Caco-2 (cell line): ENCODE measurements at regions of chr18 and their contacts with region 1.

Region 1: GRCh38 chr18:74748809-74749208 is 151.1 kb downstream of the ZNF407 start:
- DNase-seq: no peak
- H3K4me3 ChIP-seq: no peak overlapping the region
- H3K4me3 Mint-ChIP-seq: no peak overlapping the region
- H3K27ac Mint-ChIP-seq: no peak overlapping the region
- H3K4me1 ChIP-seq: no peaks in the 10 kb centered on the region
- H3K4me1 Mint-ChIP-seq: no peaks in the 10 kb centered on the region
- H3K27me3 ChIP-seq: no peaks in the 10 kb centered on the region
- H3K27me3 Mint-ChIP-seq: no peaks in the 10 kb centered on the region
- CTCF ChIP-seq: no peak

Region 2: GRCh38 chr18:74731097-74731496 is 17.7 kb before region 1 on chr18:
- CTCF ChIA-PET with region 1: no interaction called
- POLR2A ChIA-PET with region 1: no interaction called
- intact Hi-C with region 1: no loop called
- DNase-seq: no peak
- H3K4me3 ChIP-seq: no peak overlapping the region
- H3K4me3 Mint-ChIP-seq: no peak overlapping the region
- H3K27ac Mint-ChIP-seq: no peak overlapping the region
- H3K4me1 ChIP-seq: no peaks in the 10 kb centered on the region
- H3K4me1 Mint-ChIP-seq: peaks cover 6% of the 10 kb centered on the region
- H3K27me3 ChIP-seq: no peaks in the 10 kb centered on the region
- H3K27me3 Mint-ChIP-seq: no peaks in the 10 kb centered on the region
- CTCF ChIP-seq: no peak

Region 3: DNA sequence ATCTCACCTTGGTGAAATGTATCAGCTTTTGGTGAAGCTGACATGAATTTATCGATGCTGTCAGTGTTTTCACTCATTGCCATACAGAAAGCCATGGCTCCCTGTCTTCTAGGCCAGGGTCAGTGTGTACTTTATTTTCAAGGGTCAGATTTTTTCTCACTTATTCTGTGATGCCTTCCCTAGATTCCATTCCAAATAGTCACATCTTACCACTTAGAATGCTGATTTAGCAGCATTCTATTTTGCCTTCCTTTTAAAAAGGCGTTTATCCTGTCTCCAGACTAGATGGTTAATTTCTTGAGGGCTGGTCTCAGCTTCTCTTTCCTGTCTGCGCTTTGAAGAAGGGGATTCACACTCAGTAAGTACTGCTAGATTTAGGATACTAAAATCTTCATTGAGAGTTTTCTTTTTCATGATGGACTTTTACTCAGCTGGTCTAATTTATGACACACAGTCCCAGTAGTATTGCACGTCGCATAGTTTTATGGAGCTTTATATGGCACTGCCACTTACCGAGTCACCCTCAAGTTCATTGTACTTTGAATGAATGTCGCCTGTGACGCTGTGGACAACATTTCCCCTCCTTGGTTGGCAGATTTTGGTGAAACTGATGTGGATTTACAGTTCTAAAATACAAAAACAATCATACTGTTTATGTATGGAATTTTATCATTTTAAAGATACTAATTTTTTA is 42.8 kb after region 1 on chr18:
- CTCF ChIA-PET with region 1: no interaction called
- POLR2A ChIA-PET with region 1: no interaction called
- intact Hi-C with region 1: loop called (anchors 2 kb)
- DNase-seq: no peak
- H3K4me3 ChIP-seq: no peak overlapping the region
- H3K4me3 Mint-ChIP-seq: no peak overlapping the region
- H3K27ac Mint-ChIP-seq: no peak overlapping the region
- H3K4me1 ChIP-seq: no peaks in the 10 kb centered on the region
- H3K4me1 Mint-ChIP-seq: peaks cover 1% of the 10 kb centered on the region
- H3K27me3 ChIP-seq: no peaks in the 10 kb centered on the region
- H3K27me3 Mint-ChIP-seq: no peaks in the 10 kb centered on the region
- CTCF ChIP-seq: no peak